ENCODE measurements at regions of chr2 and their contacts with region 1.

Region 1: DNA sequence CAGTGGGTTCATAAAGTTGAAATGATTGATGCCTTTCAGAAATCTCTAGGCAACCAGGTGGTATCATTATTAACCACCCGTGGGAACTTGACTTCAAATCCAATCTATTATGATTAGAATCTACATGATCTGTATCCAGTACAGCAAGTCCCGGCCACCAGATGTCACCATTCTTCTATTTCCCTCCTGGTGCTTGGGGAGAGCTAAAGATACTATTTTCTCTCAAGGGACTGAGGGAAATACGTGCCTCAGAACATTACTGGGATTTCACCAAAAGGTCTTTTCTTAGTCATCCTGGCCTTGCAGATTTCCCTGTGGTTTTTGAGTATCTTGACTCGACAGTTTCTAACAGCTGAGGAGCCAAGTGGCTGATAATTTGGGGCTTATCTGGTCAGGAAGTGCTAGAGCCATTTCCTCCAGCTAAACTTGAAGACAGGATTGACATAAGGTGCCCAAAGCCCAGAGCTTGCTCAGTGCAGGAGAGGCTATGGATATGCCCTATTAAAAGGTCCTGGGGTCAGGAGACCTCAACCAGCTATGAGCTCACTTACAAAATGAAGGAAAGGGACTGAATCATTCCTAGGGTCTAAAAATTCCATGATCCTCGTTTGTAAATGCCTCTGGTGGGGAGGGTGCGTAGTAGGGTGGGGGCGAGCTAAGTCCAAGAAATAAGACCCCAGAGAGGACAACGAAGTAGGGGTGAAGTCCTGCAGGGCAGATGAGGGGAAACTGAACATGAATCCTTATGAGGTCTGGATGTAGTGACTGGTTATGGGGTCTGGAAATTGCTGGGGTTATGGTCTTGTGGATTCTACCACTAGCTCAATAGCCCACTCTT is 135.4 kb upstream of the MGAT5 start:
- DNase-seq: peak; percentile 92
- H3K4me3 ChIP-seq: no peak overlapping the region
- H3K27ac ChIP-seq: peak overlapping the region; percentile 43
- H3K4me1 ChIP-seq: peaks cover 25% of the 10 kb centered on the region
- H3K27me3 ChIP-seq: peaks cover 0 to 3% of the 10 kb centered on the region in 2 experiments
- CTCF ChIP-seq: peak; percentile 64 to 69
- POLR2A ChIP-seq: no peak

Region 2: DNA sequence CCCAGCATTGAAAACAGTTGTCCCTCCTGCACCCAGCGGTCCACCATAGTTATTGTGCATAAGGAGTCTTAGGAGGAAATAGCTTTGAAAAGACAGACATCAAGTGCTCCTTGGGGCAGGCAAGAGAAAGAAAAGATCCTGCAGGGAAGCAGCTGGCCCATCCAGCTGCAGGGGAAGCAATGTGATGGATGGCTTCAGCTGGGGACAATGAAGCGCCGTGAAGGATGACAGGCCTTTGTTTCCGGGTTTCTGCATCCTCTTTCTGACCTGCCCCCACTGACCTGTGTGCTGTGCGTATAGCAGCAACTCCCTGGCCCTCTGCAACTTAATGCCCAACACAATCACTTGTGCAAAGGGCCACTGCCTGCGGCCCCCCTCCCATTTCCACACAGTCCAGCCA is 407.3 kb before region 1 on chr2:
- CTCF ChIA-PET with region 1: no interaction called
- POLR2A ChIA-PET with region 1: no interaction called
- dilution Hi-C with region 1: no loop called
- intact Hi-C with region 1: no loop called
- DNase-seq: no peak
- H3K4me3 ChIP-seq: no peak overlapping the region
- H3K27ac ChIP-seq: no peak overlapping the region
- H3K4me1 ChIP-seq: no peaks in the 10 kb centered on the region
- H3K27me3 ChIP-seq: no peaks in the 10 kb centered on the region
- CTCF ChIP-seq: no peak
- POLR2A ChIP-seq: no peak

Region 3: DNA sequence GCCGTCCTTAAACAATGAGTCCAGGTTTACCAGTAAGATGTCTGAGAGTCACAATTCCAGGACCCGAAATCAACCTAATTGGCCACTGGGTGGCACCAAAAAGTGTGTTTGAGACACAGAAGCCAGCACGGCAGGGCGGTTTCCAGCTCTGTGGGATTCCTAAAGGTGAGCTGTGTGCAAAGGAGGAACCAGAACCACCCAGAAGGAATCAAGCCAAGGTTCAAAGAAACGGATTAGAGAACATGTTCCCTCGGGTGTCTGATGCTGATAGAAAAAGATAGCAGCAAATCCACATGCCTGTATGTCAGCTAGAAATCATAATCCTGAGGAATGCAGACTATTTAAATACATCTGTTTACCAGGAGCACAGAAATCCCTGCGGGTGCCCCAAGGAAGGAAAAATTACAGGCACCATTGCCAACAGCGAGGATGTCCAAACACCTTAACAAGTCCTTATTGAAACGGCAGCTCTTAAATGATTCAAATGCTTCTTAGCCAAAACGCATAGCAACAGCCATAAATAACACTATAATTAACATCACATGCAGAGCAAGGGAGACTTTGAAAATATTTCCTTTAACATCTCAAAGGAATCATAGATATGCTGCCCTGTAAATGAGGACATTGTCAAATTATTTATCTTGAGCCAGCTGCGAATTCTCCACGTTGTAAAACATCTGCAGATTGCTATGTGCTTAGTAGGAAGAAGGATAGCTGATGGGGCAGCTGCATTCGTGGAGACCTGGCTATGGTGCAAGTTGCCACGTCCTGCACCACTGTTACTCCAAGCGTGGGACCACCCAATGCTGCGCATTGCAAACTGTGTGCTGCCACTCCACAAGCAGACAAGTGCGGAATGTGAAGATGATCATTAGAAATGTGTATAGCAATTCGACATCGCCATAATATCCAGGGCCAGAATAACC is 231.5 kb before region 1 on chr2:
- CTCF ChIA-PET with region 1: interaction called, 37 read pairs
- POLR2A ChIA-PET with region 1: no interaction called
- dilution Hi-C with region 1: no loop called
- intact Hi-C with region 1: loop called (anchors 1 kb)
- DNase-seq: peak; percentile 61
- H3K4me3 ChIP-seq: no peak overlapping the region
- H3K27ac ChIP-seq: no peak overlapping the region
- H3K4me1 ChIP-seq: peaks cover 6% of the 10 kb centered on the region
- H3K27me3 ChIP-seq: peaks cover 0 to 26% of the 10 kb centered on the region in 2 experiments
- CTCF ChIP-seq: peak; percentile 60 to 65
- POLR2A ChIP-seq: no peak

Region 4: DNA sequence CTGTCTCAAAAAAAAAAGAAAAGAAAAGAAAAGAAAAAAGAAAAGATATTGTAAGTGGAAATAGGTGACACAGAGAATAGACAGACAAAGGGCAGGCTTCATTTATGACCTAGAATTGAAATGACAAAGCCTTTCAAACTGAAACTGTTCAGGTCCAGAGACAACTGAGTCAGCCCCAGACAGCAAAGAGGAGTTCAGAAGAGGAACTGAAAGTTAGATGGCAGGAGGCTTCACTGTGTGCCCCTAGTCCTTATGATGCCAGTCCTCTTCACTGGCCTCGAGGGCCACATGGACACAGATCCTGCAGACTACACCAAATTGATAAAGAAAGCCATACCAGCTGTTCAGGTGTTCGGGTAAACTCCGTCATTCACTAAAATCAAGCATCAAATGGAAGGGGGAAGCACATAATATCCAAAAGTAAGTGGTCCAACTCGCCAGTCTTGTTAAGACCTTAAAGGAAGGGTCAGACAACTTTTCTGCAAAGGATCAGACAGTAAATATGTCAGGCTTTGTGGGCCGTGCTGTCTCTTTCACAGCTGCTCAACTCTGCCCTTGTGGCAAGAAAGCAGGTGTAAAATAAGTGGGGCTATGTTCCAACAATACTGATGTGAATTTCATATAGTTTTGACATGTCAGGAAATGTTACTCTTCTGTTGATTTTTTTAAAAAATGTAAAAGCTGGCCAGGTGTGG is 96.5 kb before region 1 on chr2:
- CTCF ChIA-PET with region 1: no interaction called
- POLR2A ChIA-PET with region 1: no interaction called
- dilution Hi-C with region 1: no loop called
- intact Hi-C with region 1: no loop called
- DNase-seq: no peak
- H3K4me3 ChIP-seq: no peak overlapping the region
- H3K27ac ChIP-seq: no peak overlapping the region
- H3K4me1 ChIP-seq: no peaks in the 10 kb centered on the region
- H3K27me3 ChIP-seq: peaks cover 0 to 1% of the 10 kb centered on the region in 2 experiments
- CTCF ChIP-seq: no peak
- POLR2A ChIP-seq: no peak

Region 5: DNA sequence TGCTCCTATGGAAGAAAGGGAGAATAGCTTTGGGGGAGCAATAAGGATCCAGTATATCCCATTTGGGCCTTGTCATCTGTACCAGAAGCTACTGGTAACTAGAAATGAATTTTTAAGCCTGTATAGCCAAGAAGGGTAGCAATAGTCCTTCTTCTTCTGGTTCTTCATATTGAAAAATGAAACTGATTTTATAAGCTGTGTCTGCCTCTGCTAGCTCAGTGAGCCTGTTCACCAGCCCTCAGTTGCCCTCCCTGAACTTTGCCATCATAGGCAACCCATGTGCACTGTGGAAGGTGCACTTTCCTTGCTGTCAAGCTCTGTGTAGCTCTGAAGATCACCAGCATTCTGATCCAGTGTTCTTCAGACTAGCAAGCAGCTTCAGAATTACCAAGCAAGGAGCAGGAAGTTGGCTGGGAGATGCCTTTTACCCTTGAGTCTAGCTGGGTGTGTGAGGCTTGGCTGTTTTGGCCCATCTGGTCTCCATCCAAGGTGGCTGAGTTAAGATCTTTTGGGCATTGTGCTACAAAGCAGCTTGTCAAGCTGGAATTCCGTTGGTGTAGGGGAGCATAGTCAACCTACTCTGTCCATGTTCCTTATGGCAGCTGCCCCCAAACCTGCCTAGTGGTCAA is 79.6 kb after region 1 on chr2:
- CTCF ChIA-PET with region 1: interaction called, 38 read pairs
- POLR2A ChIA-PET with region 1: no interaction called
- dilution Hi-C with region 1: no loop called
- intact Hi-C with region 1: no loop called
- DNase-seq: no peak
- H3K4me3 ChIP-seq: no peak overlapping the region
- H3K27ac ChIP-seq: no peak overlapping the region
- H3K4me1 ChIP-seq: peaks cover 15% of the 10 kb centered on the region
- H3K27me3 ChIP-seq: no peaks in the 10 kb centered on the region
- CTCF ChIP-seq: no peak
- POLR2A ChIP-seq: no peak

Region 6: DNA sequence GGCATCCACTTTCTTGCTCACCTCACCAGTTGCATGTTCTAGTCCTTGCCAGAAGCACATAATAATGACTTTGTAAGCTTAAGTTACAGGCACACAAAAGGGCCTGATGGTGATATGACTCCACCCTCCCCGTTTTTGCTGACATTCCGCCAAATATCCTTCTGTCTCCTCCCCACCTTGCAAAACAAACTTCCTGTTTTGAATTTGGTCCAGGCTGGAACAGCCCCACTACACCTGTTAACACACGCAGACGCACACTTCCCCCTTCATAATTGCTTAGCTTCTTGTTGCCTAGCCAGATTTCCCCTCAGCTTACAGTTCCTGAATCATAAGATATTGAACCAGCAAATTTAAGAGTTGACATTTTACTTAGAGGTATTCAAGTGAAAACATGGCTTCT is 135.3 kb after region 1 on chr2 and contains the start of gene MGAT5:
- CTCF ChIA-PET with region 1: interaction called, 12 read pairs
- POLR2A ChIA-PET with region 1: no interaction called
- dilution Hi-C with region 1: no loop called
- intact Hi-C with region 1: no loop called
- DNase-seq: no peak
- H3K4me3 ChIP-seq: no peak within 1 kb of the TSS
- H3K27ac ChIP-seq: no peak within 1 kb of the TSS
- H3K4me1 ChIP-seq: peaks cover 16% of the 10 kb centered on the region
- H3K27me3 ChIP-seq: no peaks in the 10 kb centered on the region
- CTCF ChIP-seq: no peak
- POLR2A ChIP-seq: no peak
- total RNA-seq, gene MGAT5: 84.1 TPM in 2 replicates

Region 7: GRCh38 chr2:134375935-134376334 is 257.4 kb after region 1 on chr2:
- CTCF ChIA-PET with region 1: interaction called, 25 read pairs
- POLR2A ChIA-PET with region 1: no interaction called
- dilution Hi-C with region 1: no loop called
- intact Hi-C with region 1: loop called (anchors 1 kb)
- DNase-seq: peak; percentile 64
- H3K4me3 ChIP-seq: no peak overlapping the region
- H3K27ac ChIP-seq: no peak overlapping the region
- H3K4me1 ChIP-seq: peaks cover 6% of the 10 kb centered on the region
- H3K27me3 ChIP-seq: no peaks in the 10 kb centered on the region
- CTCF ChIP-seq: peak; percentile 30 to 46
- POLR2A ChIP-seq: no peak

Region 8: GRCh38 chr2:134460583-134460998 is 342.1 kb after region 1 on chr2:
- CTCF ChIA-PET with region 1: interaction called, 10 read pairs
- POLR2A ChIA-PET with region 1: no interaction called
- dilution Hi-C with region 1: no loop called
- intact Hi-C with region 1: no loop called
- DNase-seq: peak; percentile 52
- H3K4me3 ChIP-seq: no peak overlapping the region
- H3K27ac ChIP-seq: no peak overlapping the region
- H3K4me1 ChIP-seq: peaks cover 5% of the 10 kb centered on the region
- H3K27me3 ChIP-seq: no peaks in the 10 kb centered on the region
- CTCF ChIP-seq: peak; percentile 50 to 86
- POLR2A ChIP-seq: no peak

Measured in endothelial cell of umbilical vein (primary cell).